PC-3 (cell line): ENCODE measurements at regions of chr2 and their contacts with region 1.

Region 1: DNA sequence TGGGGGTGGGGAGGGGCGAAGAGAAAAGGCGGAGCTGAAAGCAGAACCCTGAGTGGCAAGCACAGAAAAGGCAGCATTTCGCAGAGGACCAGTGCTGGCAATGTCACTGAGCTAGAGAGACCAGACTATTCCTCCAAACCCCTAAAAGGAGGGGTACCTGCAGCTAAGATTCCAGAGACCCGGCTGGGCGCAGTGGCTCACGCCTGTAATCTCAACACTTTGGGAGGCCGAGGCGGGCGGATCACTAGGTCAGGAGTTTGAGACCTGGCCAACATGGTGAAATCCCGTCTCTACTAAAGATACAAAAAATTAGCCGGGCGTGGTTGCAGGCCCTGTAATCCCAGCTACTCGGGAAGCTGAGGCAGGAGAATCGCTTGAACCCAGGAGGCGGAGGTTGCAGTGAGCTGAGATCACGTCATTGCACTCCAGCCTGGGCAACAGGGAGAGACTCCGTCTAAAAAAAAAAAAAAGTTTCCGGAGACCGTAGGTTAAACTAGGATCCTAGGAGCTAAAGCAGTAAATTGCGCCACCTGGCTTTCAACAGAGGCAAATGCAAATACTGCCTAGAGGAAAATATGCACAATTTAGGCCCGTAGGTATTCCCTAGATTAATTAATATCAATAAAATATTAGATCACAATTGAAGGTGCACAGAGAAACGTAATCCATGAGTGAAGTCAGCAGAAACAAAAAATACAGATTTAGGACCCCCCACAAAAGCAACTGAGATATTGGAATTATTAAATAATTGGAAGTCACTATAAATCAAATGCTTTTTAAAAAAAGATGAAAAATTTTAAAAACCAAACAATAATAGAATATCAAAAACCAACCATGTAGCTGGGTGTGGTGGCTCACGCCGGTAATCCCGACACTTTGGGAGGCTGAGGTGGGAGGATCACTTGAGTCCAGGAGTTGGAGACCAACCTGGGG is 4.9 kb downstream of the UCN start:
- DNase-seq: peak; percentile 82
- ATAC-seq: peak; percentile 49
- H3K4me3 ChIP-seq: peak overlapping the region; percentile 62
- H3K27ac ChIP-seq: no peak overlapping the region
- H3K4me1 ChIP-seq: peaks cover 12% of the 10 kb centered on the region
- H3K27me3 ChIP-seq: no peaks in the 10 kb centered on the region
- CTCF ChIP-seq: peak; percentile 81

Region 2: GRCh38 chr2:27095745-27096651 is 207.4 kb before region 1 on chr2:
- CTCF ChIA-PET with region 1: interaction called, 8 read pairs
- POLR2A ChIA-PET with region 1: no interaction called
- intact Hi-C with region 1: loop called (anchors 1 kb)
- DNase-seq: peak; percentile 23
- ATAC-seq: peak; percentile 36; the same call in 1 of the 2 replicates
- H3K4me3 ChIP-seq: no peak overlapping the region
- H3K27ac ChIP-seq: no peak overlapping the region
- H3K4me1 ChIP-seq: no peaks in the 10 kb centered on the region
- H3K27me3 ChIP-seq: no peaks in the 10 kb centered on the region
- CTCF ChIP-seq: no peak

Region 3: DNA sequence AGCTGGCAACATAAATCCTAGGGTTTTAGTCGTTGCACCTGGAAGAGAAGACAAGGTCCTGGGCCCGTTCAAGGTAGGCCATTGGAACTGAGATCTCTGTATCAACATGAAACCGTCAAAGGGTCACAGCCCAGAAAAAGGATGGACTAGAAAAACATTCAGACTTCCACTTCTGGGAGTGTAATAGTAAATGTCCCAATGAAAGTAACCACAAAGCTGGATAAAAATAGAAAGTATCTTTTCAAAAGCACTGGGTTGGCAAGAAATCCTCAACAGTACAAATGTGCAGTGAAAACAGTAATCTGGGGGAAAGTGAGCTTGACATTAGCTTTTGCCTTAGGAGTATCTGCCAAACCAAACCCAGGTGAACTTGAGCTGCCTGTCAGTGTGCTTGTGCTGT is 197.4 kb before region 1 on chr2:
- CTCF ChIA-PET with region 1: interaction called, 11 read pairs
- POLR2A ChIA-PET with region 1: no interaction called
- intact Hi-C with region 1: no loop called
- DNase-seq: no peak
- ATAC-seq: no peak
- H3K4me3 ChIP-seq: no peak overlapping the region
- H3K27ac ChIP-seq: no peak overlapping the region
- H3K4me1 ChIP-seq: no peaks in the 10 kb centered on the region
- H3K27me3 ChIP-seq: no peaks in the 10 kb centered on the region
- CTCF ChIP-seq: no peak

Region 4: GRCh38 chr2:27175330-27175729 is 128.0 kb before region 1 on chr2:
- CTCF ChIA-PET with region 1: no interaction called
- POLR2A ChIA-PET with region 1: no interaction called
- intact Hi-C with region 1: no loop called
- DNase-seq: no peak
- ATAC-seq: no peak
- H3K4me3 ChIP-seq: no peak overlapping the region
- H3K27ac ChIP-seq: no peak overlapping the region
- H3K4me1 ChIP-seq: no peaks in the 10 kb centered on the region
- H3K27me3 ChIP-seq: peaks cover 52% of the 10 kb centered on the region
- CTCF ChIP-seq: no peak

Region 5: GRCh38 chr2:27281855-27282559 is 21.4 kb before region 1 on chr2 and contains the start of gene TRIM54:
- CTCF ChIA-PET with region 1: interaction called, 13 read pairs
- POLR2A ChIA-PET with region 1: interaction called, 5 read pairs
- intact Hi-C with region 1: loop called (anchors 1 kb)
- DNase-seq: peak; percentile 49
- ATAC-seq: peak; percentile 44
- H3K4me3 ChIP-seq: no peak within 1 kb of the TSS
- H3K27ac ChIP-seq: peak within 1 kb of the TSS; percentile 29; the same call in 1 of the 2 replicates
- H3K4me1 ChIP-seq: peaks cover 20% of the 10 kb centered on the region
- H3K27me3 ChIP-seq: no peaks in the 10 kb centered on the region
- CTCF ChIP-seq: no peak
- total RNA-seq, gene TRIM54: 0.51 and 1.6 TPM in 2 replicates

Region 6: DNA sequence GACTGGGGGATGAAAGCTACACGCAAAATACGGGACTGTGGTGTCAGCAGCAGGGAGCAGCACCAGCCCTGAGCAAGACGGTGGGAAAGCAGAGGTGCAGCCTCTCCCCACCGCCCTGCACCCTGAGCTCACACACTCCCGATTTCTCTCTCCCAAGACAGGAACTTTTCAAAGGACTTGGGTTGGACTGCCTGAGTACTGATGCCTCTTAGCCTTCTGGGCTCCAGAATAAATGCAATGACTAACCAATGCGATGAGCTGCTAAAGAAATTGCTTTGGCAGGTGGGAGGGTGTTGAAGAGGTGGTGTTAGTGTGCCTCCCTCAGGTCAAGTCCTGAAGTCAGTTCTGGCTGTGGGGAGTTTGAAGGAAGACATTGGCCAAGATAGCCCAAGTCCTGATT is 11.5 kb before region 1 on chr2:
- CTCF ChIA-PET with region 1: interaction called, 4 read pairs
- POLR2A ChIA-PET with region 1: interaction called, 10 read pairs
- intact Hi-C with region 1: no loop called
- DNase-seq: peak; percentile 48
- ATAC-seq: peak; percentile 11; the same call in 1 of the 2 replicates
- H3K4me3 ChIP-seq: no peak overlapping the region
- H3K27ac ChIP-seq: no peak overlapping the region
- H3K4me1 ChIP-seq: peaks cover 28% of the 10 kb centered on the region
- H3K27me3 ChIP-seq: no peaks in the 10 kb centered on the region
- CTCF ChIP-seq: peak; percentile 51

Region 7: DNA sequence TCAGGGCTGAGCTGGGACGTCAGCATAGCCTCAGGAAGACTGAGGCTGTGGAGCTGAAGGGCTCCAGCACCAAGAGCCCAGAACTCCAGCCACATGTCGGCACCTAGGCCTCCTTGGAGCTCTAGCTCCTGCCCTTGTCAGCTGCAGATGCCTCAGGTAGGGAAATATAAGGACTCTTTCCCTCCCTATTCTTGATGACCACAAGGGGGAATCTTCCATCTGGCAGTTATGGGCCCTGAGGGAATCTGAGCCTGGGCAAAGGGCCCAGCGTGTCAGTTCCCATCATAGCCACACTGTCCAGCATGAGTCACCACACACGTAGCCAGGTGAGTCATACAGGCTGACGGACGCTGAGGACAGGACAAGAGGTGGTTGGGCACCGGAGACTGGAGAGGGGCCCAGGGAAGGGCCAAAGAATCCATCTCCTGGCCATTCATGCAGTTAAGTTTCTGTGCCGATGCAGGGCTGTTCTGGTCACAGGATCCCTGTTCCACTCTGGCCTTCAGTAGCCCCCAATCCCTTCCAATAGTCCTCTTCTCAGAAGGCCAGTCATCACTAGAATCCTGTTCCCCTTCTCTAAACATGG is 17.7 kb after region 1 on chr2:
- CTCF ChIA-PET with region 1: no interaction called
- POLR2A ChIA-PET with region 1: no interaction called
- intact Hi-C with region 1: no loop called
- DNase-seq: peak; percentile 99
- ATAC-seq: peak; percentile 86
- H3K4me3 ChIP-seq: peak overlapping the region; percentile 81
- H3K27ac ChIP-seq: peak overlapping the region; percentile 94
- H3K4me1 ChIP-seq: peaks cover 32% of the 10 kb centered on the region
- H3K27me3 ChIP-seq: no peaks in the 10 kb centered on the region
- CTCF ChIP-seq: peak; percentile 70

Region 8: DNA sequence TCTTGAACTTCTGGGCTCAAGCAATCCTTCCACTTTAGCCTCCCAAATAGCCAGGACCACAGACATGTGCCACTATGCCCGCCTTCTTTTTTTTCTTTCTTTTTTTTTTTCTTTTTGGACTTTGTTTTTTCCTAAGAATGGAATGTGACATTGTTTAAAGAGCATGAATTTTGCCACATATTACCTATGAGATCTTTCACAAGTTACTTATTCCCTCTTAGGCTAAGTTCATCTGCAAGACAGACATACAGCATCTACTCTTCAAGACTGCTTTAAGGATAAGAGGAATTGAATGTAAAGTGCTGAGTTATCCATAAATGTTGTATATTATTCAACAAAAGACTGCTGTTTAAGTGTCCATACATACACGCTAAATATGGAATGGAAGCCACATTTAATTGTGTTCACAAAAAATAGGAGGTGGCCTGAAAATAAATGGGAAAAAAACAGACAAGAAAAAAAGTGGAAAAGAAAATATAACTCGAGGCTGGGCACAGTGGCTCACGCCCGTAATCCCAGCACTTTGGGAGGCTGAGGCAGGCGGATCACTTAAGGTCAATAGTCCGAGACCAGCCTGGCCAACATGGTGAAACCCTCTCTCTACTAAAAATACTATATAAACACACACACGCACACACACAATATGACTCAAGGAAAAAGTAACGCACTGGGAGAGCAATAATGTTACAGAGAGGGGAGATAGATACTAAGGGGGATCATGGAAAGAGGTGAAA is 109.2 kb after region 1 on chr2:
- CTCF ChIA-PET with region 1: no interaction called
- POLR2A ChIA-PET with region 1: no interaction called
- intact Hi-C with region 1: no loop called
- DNase-seq: no peak
- ATAC-seq: no peak
- H3K4me3 ChIP-seq: no peak overlapping the region
- H3K27ac ChIP-seq: no peak overlapping the region
- H3K4me1 ChIP-seq: peaks cover 9% of the 10 kb centered on the region; the same call in 1 of the 2 replicates
- H3K27me3 ChIP-seq: no peaks in the 10 kb centered on the region
- CTCF ChIP-seq: no peak

Region 9: GRCh38 chr2:27428213-27428977 is 125.0 kb after region 1 on chr2 and contains the start of gene NRBP1:
- CTCF ChIA-PET with region 1: no interaction called
- POLR2A ChIA-PET with region 1: no interaction called
- intact Hi-C with region 1: no loop called
- DNase-seq: peak; percentile 94
- ATAC-seq: peak; percentile 84
- H3K4me3 ChIP-seq: peak within 1 kb of the TSS; percentile 85
- H3K27ac ChIP-seq: peak within 1 kb of the TSS; percentile 33
- H3K4me1 ChIP-seq: peaks cover 19% of the 10 kb centered on the region
- H3K27me3 ChIP-seq: no peaks in the 10 kb centered on the region
- CTCF ChIP-seq: peak; percentile 45
- total RNA-seq, gene NRBP1: 66.6 and 69.3 TPM in 2 replicates